ENCODE measurements at regions of chr10 and their contacts with region 1.

Region 1: GRCh38 chr10:121753726-121754476 is 155.7 kb upstream of the FGFR2 start:
- DNase-seq: peak; percentile 24
- H3K4me3 Mint-ChIP-seq: no peak overlapping the region
- H3K27ac Mint-ChIP-seq: peak overlapping the region; percentile 27
- H3K4me1 Mint-ChIP-seq: peaks cover 19% of the 10 kb centered on the region
- H3K27me3 Mint-ChIP-seq: no peaks in the 10 kb centered on the region

Region 2: DNA sequence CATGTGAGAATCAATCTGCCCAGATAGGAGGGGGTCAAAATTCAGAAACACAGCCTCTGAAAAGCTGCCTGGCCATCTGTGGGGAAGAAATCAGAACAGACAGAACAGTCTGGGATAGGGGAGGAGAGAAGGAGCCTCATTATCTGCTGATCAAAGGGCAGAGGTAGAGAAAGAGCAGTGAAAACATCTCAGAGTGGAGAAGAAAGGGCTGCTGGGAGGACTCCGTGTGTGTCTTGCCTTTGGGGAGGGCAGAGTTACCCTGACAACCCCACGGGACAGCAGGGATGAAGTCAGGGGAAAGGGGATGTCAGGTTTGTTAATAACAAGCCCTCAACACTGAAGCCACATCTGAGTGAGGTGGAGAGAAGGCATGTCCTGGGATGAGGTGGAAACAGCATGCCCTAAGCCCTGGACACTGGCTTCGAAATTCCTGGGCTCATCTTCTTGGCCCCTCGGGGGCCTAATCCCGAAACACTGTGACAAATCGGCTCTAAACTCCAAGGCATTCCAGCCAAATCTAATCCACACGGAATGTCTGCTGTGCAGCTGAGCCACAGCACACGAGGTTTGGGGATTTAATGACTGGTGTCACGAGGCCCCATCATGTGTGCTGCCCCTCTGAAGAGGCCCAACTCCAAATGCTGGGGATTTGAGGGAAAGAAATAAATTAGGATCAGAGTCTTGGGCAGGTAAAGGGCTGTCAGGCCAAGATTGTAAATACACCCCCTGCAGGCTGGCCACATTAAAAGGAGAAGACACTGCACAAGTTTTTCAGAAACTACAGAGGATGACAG is 72.8 kb before region 1 on chr10:
- CTCF ChIA-PET with region 1: no interaction called
- intact Hi-C with region 1: no loop called
- DNase-seq: no peak
- H3K4me3 Mint-ChIP-seq: no peak overlapping the region
- H3K27ac Mint-ChIP-seq: no peak overlapping the region
- H3K4me1 Mint-ChIP-seq: no peaks in the 10 kb centered on the region
- H3K27me3 Mint-ChIP-seq: peaks cover 18% of the 10 kb centered on the region

Region 3: GRCh38 chr10:121734589-121735045 is 19.3 kb before region 1 on chr10:
- CTCF ChIA-PET with region 1: no interaction called
- intact Hi-C with region 1: loop called (anchors 1 kb)
- DNase-seq: peak; percentile 25
- H3K4me3 Mint-ChIP-seq: no peak overlapping the region
- H3K27ac Mint-ChIP-seq: no peak overlapping the region
- H3K4me1 Mint-ChIP-seq: peaks cover 7% of the 10 kb centered on the region
- H3K27me3 Mint-ChIP-seq: peaks cover 39% of the 10 kb centered on the region

Region 4: DNA sequence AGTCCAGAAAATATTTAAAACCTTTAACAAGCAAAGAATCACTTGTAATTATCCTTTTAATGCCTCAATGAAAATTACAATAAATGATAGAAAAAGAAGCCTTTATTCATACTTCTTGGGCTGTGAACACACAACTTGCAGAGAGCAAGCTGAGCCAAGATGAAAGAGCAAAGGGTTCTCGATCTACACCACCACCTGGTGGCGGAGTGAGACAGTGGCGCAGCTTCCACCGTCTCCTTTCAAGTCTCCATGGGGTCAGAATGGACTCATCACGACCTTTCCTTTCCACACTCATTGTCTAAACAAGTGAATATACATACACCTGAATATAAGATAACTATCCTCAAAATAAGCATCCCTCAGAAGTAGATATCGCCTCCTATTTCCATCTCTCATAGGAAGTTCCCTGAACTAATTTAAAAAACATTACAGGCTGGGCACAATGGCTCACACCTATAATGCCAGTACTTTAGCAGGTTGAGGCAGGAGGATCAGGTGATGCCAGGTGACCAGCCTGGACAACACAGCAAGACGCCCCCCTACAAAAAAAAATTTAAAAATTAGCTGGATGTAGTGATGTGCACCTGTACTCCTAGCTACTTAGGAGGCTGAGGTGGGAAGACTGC is 133.2 kb after region 1 on chr10:
- CTCF ChIA-PET with region 1: interaction called, 5 read pairs
- intact Hi-C with region 1: loop called (anchors 5 kb)
- DNase-seq: peak; percentile 73
- H3K4me3 Mint-ChIP-seq: no peak overlapping the region
- H3K27ac Mint-ChIP-seq: no peak overlapping the region
- H3K4me1 Mint-ChIP-seq: peaks cover 3% of the 10 kb centered on the region
- H3K27me3 Mint-ChIP-seq: no peaks in the 10 kb centered on the region

Region 5: DNA sequence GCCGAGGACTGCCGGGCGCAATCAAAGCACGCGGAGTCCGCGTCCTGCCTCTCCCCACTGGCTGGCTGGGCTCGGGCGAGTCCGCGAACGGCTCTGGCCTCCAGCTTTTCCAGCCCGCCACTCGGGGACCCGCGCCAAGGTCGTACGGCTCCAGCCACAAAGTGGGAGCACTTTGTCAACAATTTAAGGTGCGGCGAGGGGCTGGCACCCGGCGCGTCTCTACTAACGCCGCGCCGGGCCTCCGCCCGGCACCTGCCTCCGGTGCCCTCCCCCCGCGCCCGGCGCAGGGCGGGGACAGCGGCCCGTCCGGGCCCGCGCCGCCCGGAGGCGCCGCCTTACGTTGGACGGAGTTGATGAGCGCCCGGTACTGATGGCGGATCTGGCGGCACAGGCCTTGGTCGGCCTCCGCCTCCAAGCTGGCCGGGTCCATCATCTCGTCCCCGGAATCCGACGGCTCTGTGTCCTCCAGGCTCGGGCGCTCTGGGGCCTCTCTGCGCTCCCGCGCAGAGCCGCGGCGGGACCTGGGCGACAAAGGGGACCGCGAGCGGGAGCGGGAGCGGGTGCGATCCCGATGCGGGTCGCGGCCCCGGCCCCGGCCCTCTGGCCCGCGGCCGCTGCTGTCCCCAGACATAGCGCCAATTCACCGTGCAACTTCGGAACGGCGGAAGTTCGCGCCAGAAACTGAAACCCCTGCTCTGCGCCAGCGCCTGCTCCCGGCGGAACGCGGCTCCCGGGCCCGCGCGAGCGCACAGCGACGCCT is 220.8 kb after region 1 on chr10 and contains the start of gene NSMCE4A:
- CTCF ChIA-PET with region 1: no interaction called
- intact Hi-C with region 1: loop called (anchors 1 kb)
- DNase-seq: peak; percentile 76
- H3K4me3 Mint-ChIP-seq: peak within 1 kb of the TSS; percentile 76
- H3K27ac Mint-ChIP-seq: no peak within 1 kb of the TSS
- H3K4me1 Mint-ChIP-seq: peaks cover 24% of the 10 kb centered on the region
- H3K27me3 Mint-ChIP-seq: no peaks in the 10 kb centered on the region
- total RNA-seq, gene NSMCE4A: 47.5 to 48.8 TPM

Region 6: DNA sequence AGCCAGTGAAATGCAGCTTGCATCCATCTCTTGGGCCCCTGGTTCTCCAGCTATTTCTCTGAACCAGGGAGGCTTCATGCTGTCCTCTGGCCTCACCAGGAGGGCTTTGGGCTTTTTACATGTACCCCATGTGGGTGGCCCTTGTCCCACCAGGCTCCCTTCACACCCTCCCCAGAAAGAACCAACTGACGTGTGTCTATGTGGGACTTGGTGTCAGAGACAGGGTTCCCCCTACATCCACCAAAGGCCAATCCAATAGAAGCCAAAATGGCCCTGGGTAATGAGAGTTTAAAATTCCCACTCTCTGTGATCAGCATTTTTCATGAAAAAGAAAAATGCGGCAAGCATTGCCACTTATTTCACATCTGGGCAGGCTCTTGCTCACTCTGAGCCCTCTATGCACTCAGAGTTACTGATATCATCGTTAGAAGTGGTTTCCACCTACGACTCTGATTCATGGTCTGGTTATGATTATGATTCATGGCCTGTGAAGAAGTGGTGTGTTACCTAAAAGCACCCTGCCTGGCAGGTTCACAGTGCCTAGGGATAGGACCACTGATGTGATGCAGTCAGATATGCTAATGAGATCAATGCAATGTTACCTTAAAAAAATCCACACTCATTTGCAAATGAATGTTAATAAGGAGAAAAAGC is 1533.8 kb after region 1 on chr10:
- CTCF ChIA-PET with region 1: no interaction called
- intact Hi-C with region 1: loop called (anchors 10 kb)
- DNase-seq: peak; percentile 78
- H3K4me3 Mint-ChIP-seq: no peak overlapping the region
- H3K27ac Mint-ChIP-seq: peak overlapping the region; percentile 78
- H3K4me1 Mint-ChIP-seq: peaks cover 19% of the 10 kb centered on the region
- H3K27me3 Mint-ChIP-seq: peaks cover 2% of the 10 kb centered on the region